H1 (cell line): ENCODE measurements at regions of chr16 and their contacts with region 1.

Region 1: DNA sequence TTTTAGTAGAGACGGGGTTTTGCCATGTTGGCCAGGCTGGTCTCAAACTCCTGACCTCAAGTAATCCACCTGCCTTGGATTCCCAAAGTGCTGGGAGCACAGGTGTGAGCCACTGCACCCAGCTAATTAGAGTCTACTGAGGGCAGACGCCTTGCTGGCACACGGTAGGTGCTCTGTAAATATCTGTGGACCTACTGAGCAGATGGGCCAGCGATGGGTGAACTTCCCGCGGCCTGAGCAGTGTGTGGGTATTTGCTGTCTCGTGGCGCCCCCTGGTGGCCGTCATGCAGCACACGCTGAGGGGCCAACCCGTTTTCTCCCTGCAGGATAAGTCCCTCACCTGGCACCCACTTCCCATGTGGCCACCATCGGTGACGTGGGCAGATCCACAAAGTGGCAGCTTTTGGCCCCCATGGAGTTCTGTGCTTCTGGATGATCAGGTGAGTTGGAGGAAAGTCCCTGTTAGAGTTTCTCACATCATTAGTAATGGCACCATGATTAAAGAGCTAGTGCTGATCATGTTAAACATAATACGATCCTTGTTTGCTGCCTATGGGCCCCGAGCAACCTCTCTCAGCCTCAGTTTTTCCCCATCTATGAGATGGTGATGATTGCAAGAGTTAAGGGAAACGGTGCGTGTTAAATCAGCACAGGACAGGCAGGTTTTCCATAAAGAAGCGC is 40.7 kb downstream of the ZDHHC7 start:
- DNase-seq: peak; percentile 67 to 91
- H3K4me3 ChIP-seq: no peak overlapping the region
- H3K27ac ChIP-seq: no peak overlapping the region
- H3K4me1 ChIP-seq: no peaks in the 10 kb centered on the region
- H3K27me3 ChIP-seq: no peaks in the 10 kb centered on the region; a peak in 1 of 7 replicates
- CTCF ChIP-seq: peak; percentile 86 to 96 (median 95)
- EP300 ChIP-seq: no peak
- POLR2A ChIP-seq: no peak
- RAD21 ChIP-seq: peak; percentile 96 to 97

Region 2: DNA sequence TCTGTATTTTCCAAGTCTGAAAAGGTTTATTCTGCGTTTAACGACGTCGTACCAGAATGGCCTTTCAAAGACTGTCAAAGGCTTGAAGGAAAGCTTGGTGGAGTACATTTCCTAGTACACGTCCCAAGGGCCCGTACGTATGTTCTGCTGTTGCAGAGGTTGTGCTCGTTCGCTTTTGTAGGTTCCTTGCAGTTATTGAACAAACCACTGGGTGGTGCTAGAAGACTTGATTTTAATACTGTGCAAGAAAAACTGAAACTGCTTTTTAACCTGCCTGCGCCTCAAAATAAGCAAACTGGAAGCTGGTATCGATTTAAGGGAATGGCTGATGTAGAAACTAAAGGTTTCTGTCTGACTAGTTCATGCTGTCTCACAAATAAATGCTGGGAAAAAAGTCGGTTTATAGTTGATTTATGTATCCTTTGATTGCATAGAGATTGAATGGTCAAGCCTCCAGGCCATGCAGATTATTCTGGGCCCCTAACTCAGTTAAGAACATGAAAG is 216.2 kb before region 1 on chr16:
- CTCF ChIA-PET with region 1: interaction called, 113 read pairs
- POLR2A ChIA-PET with region 1: no interaction called
- DNase-seq: peak; percentile 33 to 76
- H3K4me3 ChIP-seq: no peak overlapping the region
- H3K27ac ChIP-seq: no peak overlapping the region
- H3K4me1 ChIP-seq: no peaks in the 10 kb centered on the region
- H3K27me3 ChIP-seq: no peaks in the 10 kb centered on the region
- CTCF ChIP-seq: peak in 2 of 3 experiments; percentile 73 to 79; a peak in 3 of 4 replicates
- EP300 ChIP-seq: no peak
- POLR2A ChIP-seq: no peak
- RAD21 ChIP-seq: peak; percentile 79 to 82

Region 3: DNA sequence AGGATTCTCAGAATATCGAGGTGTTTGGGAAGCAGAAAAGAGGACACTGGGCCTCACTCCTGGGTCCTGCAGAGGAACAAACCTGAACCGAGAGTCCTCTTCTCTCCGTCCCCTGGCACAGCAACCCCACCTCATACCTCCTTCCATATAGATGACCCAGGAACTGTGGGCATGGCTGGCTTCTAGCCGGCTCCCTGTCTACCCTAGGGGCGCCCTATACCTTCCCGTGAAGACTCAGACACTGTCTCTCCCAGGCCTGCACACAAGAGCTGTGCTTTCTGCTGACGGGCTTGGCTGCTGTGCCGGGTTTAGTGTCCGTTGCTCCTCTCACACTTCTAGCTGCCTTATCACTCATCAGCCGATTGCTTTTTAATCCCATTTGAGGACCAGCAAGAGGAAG is 197.3 kb before region 1 on chr16:
- CTCF ChIA-PET with region 1: interaction called, 14 read pairs
- POLR2A ChIA-PET with region 1: no interaction called
- DNase-seq: no peak
- H3K4me3 ChIP-seq: no peak overlapping the region
- H3K27ac ChIP-seq: no peak overlapping the region
- H3K4me1 ChIP-seq: no peaks in the 10 kb centered on the region
- H3K27me3 ChIP-seq: no peaks in the 10 kb centered on the region
- CTCF ChIP-seq: peak in 1 of 3 experiments; percentile 11; a peak in 1 of 4 replicates
- EP300 ChIP-seq: no peak
- POLR2A ChIP-seq: no peak
- RAD21 ChIP-seq: peak in 1 of 2 experiments; percentile 36; a peak in 2 of 4 replicates

Region 4: GRCh38 chr16:84933774-84934631 is 36.6 kb before region 1 on chr16:
- CTCF ChIA-PET with region 1: interaction called, 170 read pairs
- POLR2A ChIA-PET with region 1: no interaction called
- DNase-seq: no peak
- H3K4me3 ChIP-seq: no peak overlapping the region
- H3K27ac ChIP-seq: no peak overlapping the region
- H3K4me1 ChIP-seq: no peaks in the 10 kb centered on the region
- H3K27me3 ChIP-seq: no peaks in the 10 kb centered on the region
- CTCF ChIP-seq: no peak
- EP300 ChIP-seq: no peak
- POLR2A ChIP-seq: no peak
- RAD21 ChIP-seq: no peak

Region 5: DNA sequence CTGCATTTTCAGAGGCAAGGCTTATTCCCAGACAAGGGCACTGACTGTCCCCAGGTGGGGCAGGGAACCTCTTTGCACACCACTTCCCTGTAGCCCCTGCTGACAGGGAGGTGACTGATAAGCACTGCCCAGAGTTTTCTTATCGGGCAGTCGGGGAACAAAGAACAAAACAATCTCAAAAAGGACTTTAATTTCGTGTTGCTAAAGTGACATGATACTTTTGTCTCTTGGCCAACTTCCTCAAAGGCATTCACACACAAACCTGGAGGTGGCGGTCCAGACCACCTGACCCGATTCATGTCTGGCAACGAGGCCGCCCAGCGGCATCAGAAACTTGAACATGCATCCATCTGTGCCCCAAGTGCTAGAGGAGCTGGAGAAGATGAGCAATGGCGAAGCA is 11.8 kb after region 1 on chr16:
- CTCF ChIA-PET with region 1: interaction called, 25 read pairs
- POLR2A ChIA-PET with region 1: no interaction called
- DNase-seq: no peak
- H3K4me3 ChIP-seq: no peak overlapping the region
- H3K27ac ChIP-seq: no peak overlapping the region
- H3K4me1 ChIP-seq: no peaks in the 10 kb centered on the region
- H3K27me3 ChIP-seq: no peaks in the 10 kb centered on the region
- CTCF ChIP-seq: peak in 2 of 3 experiments; percentile 9 to 24; a peak in 3 of 4 replicates
- EP300 ChIP-seq: no peak
- POLR2A ChIP-seq: no peak
- RAD21 ChIP-seq: peak; percentile 36 to 50; a peak in 3 of 4 replicates

Region 6: GRCh38 chr16:85010931-85011845 is 40.6 kb after region 1 on chr16 and contains the start of gene ZDHHC7:
- CTCF ChIA-PET with region 1: interaction called, 10 read pairs
- POLR2A ChIA-PET with region 1: interaction called, 3 read pairs
- DNase-seq: peak; percentile 46 to 89
- H3K4me3 ChIP-seq: peak within 1 kb of the TSS; percentile 86 to 97 (median 93)
- H3K27ac ChIP-seq: peak within 1 kb of the TSS; percentile 86; the same call in 1 of the 2 replicates
- H3K4me1 ChIP-seq: peaks cover 0 to 4% (median 0%) of the 10 kb centered on the region in 4 experiments; a peak in 3 of 7 replicates
- H3K27me3 ChIP-seq: no peaks in the 10 kb centered on the region
- CTCF ChIP-seq: no peak
- EP300 ChIP-seq: no peak; a peak in 1 of 3 replicates
- POLR2A ChIP-seq: peak in 1 of 2 experiments; percentile 82; a peak in 2 of 3 replicates
- RAD21 ChIP-seq: no peak
- total RNA-seq, gene ZDHHC7: 40.5 and 43.5 TPM in 2 replicates

Region 7: GRCh38 chr16:85025781-85026641 is 55.4 kb after region 1 on chr16:
- CTCF ChIA-PET with region 1: no interaction called
- POLR2A ChIA-PET with region 1: no interaction called
- DNase-seq: no peak
- H3K4me3 ChIP-seq: no peak overlapping the region
- H3K27ac ChIP-seq: no peak overlapping the region
- H3K4me1 ChIP-seq: peaks cover 3 to 7% (median 3%) of the 10 kb centered on the region in 4 experiments; a peak in 5 of 7 replicates
- H3K27me3 ChIP-seq: peaks cover 0 to 14% (median 7%) of the 10 kb centered on the region in 4 experiments; a peak in 4 of 7 replicates
- CTCF ChIP-seq: no peak
- EP300 ChIP-seq: no peak
- POLR2A ChIP-seq: no peak
- RAD21 ChIP-seq: no peak